GM18951 (cell line): ENCODE measurements at regions of chr1 and their contacts with region 1.

Region 1: GRCh38 chr1:181134543-181135362 is 46.3 kb downstream of the IER5 start:
- POLR2A ChIP-seq: peak; percentile 62

Region 2: DNA sequence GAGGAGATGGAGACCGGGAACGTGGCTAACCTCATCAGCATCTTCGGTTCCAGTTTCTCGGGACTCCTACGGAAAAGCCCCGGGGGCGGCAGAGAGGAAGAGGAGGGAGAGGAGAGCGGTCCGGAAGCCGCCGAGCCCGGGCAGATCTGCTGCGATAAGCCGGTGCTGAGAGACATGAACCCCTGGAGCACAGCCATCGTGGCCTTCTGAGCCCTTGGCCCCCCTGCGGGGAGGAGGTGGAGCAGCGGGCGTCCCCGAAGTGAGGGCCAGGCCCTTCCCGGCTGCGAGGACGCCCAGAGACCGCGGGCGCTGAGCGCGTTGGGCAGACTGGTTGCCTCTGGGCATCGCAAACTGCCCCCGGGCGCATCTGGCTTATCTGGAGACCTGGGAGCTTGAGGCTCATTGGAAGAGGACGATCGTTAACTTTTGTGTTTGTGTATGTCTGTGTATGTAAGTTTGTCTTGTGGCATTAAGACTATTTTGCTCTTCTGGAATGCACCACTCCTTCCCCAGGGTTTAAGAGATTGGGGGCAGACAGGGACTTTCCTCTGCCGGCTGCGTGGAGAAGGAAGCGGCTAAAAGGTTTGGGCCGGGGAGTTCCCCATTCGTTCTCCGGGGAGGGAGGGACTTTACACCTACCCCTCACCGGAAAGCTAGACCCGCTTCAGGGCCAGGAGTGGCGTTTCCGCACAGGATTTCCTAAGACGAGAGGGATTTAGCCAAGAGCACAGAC is 44.9 kb before region 1 on chr1:
- in situ Hi-C with region 1: loop called (anchors 5 kb)
- POLR2A ChIP-seq: peak; percentile 64

Region 3: GRCh38 chr1:181190364-181191035 is 55.7 kb after region 1 on chr1:
- in situ Hi-C with region 1: no loop called
- POLR2A ChIP-seq: no peak